ENCODE measurements at regions of chr17 and their contacts with region 1.

Region 1: GRCh38 chr17:16215273-16215964 is at the start of gene NCOR1:
- DNase-seq: peak; percentile 96
- ATAC-seq: peak; percentile 87
- H3K4me3 Mint-ChIP-seq: peak within 1 kb of the TSS; percentile 93
- H3K27ac Mint-ChIP-seq: peak within 1 kb of the TSS; percentile 81
- H3K4me1 Mint-ChIP-seq: peaks cover 42% of the 10 kb centered on the region
- H3K27me3 Mint-ChIP-seq: no peaks in the 10 kb centered on the region
- total RNA-seq, gene NCOR1: 110 to 155 TPM

Region 2: DNA sequence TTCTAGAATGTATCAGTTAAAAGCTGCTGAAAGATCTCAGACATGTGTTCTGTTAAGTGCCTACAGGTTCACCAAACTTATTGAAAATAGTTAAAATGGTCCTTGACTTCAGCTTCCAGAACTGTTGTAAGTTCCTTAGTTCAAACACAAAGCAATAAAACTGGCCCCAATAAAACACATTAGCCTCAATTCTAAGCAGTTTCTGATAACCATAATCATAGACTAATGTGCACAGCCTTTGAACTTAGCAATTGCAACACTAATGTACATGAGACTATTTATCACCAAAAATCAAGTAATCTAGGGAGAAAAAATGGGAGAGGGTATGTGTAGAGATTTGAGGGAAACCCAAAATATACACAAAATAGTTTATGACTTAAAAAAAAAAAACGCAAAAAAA is 17.0 kb after region 1 on chr17:
- CTCF ChIA-PET with region 1: interaction called, 4 read pairs
- POLR2A ChIA-PET with region 1: no interaction called
- intact Hi-C with region 1: loop called (anchors 1 kb)
- DNase-seq: no peak
- ATAC-seq: no peak
- H3K4me3 Mint-ChIP-seq: no peak overlapping the region
- H3K27ac Mint-ChIP-seq: no peak overlapping the region
- H3K4me1 Mint-ChIP-seq: peaks cover 22% of the 10 kb centered on the region
- H3K27me3 Mint-ChIP-seq: no peaks in the 10 kb centered on the region

Region 3: DNA sequence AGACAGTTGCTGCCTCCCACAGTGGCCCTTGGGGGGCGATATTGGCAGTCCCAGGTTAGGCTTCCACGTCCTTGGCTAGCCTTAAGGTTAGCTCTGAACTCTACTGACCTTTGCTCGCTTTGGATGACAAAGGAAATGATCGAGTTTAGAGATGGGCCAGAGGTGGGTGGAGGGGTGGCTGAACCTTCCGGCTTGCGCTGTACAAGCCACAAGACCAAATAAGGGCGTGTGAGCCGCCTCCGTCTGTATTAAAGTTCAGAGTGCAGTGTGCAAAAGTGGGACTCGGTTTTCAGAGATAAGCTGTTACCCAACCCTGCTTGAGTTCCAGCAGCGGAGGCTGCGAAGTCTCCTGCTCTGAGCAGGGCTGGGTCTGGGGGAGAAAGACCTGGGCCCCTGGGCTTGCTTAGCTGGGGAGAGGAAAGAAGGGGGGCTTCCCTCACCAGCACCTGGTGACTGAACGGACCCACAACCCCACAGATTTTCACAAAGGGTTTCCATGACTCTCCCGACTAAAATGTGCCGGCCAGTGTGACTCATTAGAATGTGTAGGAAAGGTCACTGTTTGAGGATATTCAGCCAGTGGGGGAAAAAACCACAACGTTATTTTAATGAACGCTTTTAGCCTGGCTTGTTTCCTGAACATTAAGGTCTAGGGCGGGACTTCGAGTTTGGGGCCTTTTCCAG is 70.7 kb after region 1 on chr17:
- CTCF ChIA-PET with region 1: interaction called, 8 read pairs
- POLR2A ChIA-PET with region 1: no interaction called
- intact Hi-C with region 1: loop called (anchors 1 to 5 kb)
- DNase-seq: peak; percentile 90
- ATAC-seq: peak; percentile 94
- H3K4me3 Mint-ChIP-seq: peak overlapping the region; percentile 66
- H3K27ac Mint-ChIP-seq: peak overlapping the region; percentile 96
- H3K4me1 Mint-ChIP-seq: peaks cover 53% of the 10 kb centered on the region
- H3K27me3 Mint-ChIP-seq: no peaks in the 10 kb centered on the region

Region 4: DNA sequence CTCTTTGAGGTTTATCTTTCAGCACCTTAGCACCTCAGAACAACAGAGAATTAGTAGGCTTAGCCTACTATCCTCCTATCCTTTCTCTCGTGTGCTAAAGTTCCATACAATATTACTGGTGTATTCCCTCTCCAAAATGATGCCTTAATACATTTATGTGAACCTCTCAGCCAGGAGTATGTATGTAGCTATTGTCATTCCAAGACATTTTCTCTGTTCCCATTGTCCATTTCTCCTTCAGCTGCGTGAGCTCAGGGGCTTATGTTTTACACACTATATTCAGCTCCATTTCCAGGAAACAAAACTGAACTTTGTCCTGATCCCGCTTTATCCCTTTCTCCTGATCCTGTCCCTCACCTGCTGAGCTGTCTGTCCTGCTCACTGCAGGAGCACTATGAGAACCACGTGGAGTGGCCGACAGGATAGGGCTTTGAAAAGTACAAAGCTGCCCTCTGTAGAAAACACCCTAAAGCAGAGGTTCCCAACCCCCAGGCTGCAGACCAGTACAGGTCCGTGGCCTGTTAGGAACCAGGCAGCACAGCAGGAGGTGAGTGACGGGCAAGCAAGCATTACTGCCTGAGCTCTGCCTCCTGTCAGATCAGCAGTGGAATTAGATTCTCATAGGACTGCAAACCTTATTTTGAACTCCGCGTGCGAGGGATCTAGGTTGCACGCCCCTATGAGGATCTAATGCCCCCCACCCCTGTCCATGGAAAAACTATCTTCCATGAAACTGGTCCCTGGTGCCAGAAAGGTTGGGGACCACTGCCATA is 82.1 kb after region 1 on chr17:
- CTCF ChIA-PET with region 1: no interaction called
- POLR2A ChIA-PET with region 1: no interaction called
- intact Hi-C with region 1: no loop called
- DNase-seq: no peak
- ATAC-seq: no peak
- H3K4me3 Mint-ChIP-seq: no peak overlapping the region
- H3K27ac Mint-ChIP-seq: no peak overlapping the region
- H3K4me1 Mint-ChIP-seq: peaks cover 20% of the 10 kb centered on the region
- H3K27me3 Mint-ChIP-seq: no peaks in the 10 kb centered on the region

Region 5: GRCh38 chr17:16353317-16354174 is 138.1 kb after region 1 on chr17 and contains the start of gene CENPV:
- CTCF ChIA-PET with region 1: no interaction called
- POLR2A ChIA-PET with region 1: interaction called, 5 read pairs
- intact Hi-C with region 1: loop called (anchors 1 to 2 kb)
- DNase-seq: peak; percentile 81
- ATAC-seq: peak; percentile 82
- H3K4me3 Mint-ChIP-seq: peak within 1 kb of the TSS; percentile 97
- H3K27ac Mint-ChIP-seq: peak within 1 kb of the TSS; percentile 84
- H3K4me1 Mint-ChIP-seq: peaks cover 22% of the 10 kb centered on the region
- H3K27me3 Mint-ChIP-seq: no peaks in the 10 kb centered on the region
- total RNA-seq, gene CENPV: 100 to 132 TPM

Region 6: GRCh38 chr17:16492613-16493530 is 277.5 kb after region 1 on chr17:
- CTCF ChIA-PET with region 1: no interaction called
- POLR2A ChIA-PET with region 1: no interaction called
- intact Hi-C with region 1: no loop called
- DNase-seq: no peak
- ATAC-seq: no peak
- H3K4me3 Mint-ChIP-seq: peak overlapping the region; percentile 58
- H3K27ac Mint-ChIP-seq: no peak overlapping the region
- H3K4me1 Mint-ChIP-seq: peaks cover 5% of the 10 kb centered on the region
- H3K27me3 Mint-ChIP-seq: peaks cover 12% of the 10 kb centered on the region

Region 7: GRCh38 chr17:16653209-16654041 is 438.0 kb after region 1 on chr17 and contains the start of gene ZNF624:
- CTCF ChIA-PET with region 1: no interaction called
- POLR2A ChIA-PET with region 1: no interaction called
- intact Hi-C with region 1: loop called in 1 of 2 experiments (anchors 1 kb)
- DNase-seq: peak; percentile 94
- ATAC-seq: peak; percentile 97
- H3K4me3 Mint-ChIP-seq: peak within 1 kb of the TSS; percentile 81
- H3K27ac Mint-ChIP-seq: peak within 1 kb of the TSS; percentile 73
- H3K4me1 Mint-ChIP-seq: peaks cover 18% of the 10 kb centered on the region
- H3K27me3 Mint-ChIP-seq: peaks cover 5% of the 10 kb centered on the region
- total RNA-seq, gene ZNF624: 3.7 to 4.4 TPM

Measured in activated CD4-positive, alpha-beta T cell treated with anti-CD3 and anti-CD28 coated beads for 36 hours (primary cell).